ENCODE measurements at regions of chr10 and their contacts with region 1.

Region 1: GRCh38 chr10:119859420-119860258 is 13.0 kb downstream of the MCMBP start:
- DNase-seq: no peak
- ATAC-seq: peak; percentile 55
- H3K4me3 Mint-ChIP-seq: no peak overlapping the region
- H3K27ac Mint-ChIP-seq: peak overlapping the region; percentile 10
- H3K4me1 Mint-ChIP-seq: peaks cover 40% of the 10 kb centered on the region
- H3K27me3 Mint-ChIP-seq: no peaks in the 10 kb centered on the region
- CTCF ChIP-seq: peak; percentile 83

Region 2: GRCh38 chr10:119686439-119687191 is 173.0 kb before region 1 on chr10:
- CTCF ChIA-PET with region 1: interaction called, 37 read pairs
- POLR2A ChIA-PET with region 1: interaction called, 6 read pairs
- intact Hi-C with region 1: loop called (anchors 1 kb)
- DNase-seq: peak; percentile 86
- ATAC-seq: peak; percentile 89
- H3K4me3 Mint-ChIP-seq: peak overlapping the region; percentile 21
- H3K27ac Mint-ChIP-seq: peak overlapping the region; percentile 77
- H3K4me1 Mint-ChIP-seq: peaks cover 20% of the 10 kb centered on the region
- H3K27me3 Mint-ChIP-seq: no peaks in the 10 kb centered on the region
- CTCF ChIP-seq: peak; percentile 98

Region 3: DNA sequence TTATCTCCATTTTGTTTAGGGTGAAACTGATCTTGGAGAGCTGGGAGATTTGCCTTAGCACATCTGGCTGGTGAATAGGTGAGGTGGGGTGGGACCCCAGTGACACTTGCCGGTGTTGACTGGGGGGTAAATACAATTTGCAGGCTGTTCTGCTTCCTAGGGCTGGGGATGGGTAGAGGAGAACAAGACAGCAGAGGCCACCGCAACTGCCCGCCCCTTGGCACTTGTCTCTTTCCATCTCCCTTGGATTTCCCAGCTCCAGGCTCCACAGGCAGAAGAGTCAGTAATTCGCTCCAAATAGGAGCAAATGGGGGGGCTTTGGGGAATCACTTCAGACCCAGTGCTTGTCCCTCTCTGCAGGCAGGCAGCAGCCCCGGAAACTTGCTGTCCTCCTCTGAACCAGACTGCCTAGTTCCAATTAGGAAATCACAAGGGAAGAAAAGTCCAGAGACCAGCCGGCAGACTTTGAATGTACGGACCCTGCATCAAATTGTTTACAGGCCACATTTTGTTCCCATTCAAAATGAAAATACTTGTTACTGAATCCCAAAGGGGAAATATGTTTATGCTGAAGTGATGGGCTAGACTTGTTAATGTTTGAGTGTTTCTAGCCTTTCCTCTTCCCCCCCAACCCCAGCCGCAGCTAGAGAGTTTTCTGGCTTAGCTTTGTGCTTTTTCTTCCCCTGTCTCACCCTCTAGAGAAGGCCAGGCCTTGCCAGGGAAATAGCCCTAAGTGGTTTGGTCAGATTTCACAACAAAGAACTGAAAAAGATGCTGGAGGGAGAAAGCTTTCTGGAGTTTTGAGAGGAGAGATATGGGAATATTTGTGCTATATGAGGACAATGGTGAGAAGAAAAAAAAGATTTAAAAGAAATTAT is 143.8 kb before region 1 on chr10:
- CTCF ChIA-PET with region 1: interaction called, 10 read pairs
- POLR2A ChIA-PET with region 1: no interaction called
- intact Hi-C with region 1: no loop called
- DNase-seq: no peak
- ATAC-seq: no peak
- H3K4me3 Mint-ChIP-seq: no peak overlapping the region
- H3K27ac Mint-ChIP-seq: no peak overlapping the region
- H3K4me1 Mint-ChIP-seq: peaks cover 7% of the 10 kb centered on the region
- H3K27me3 Mint-ChIP-seq: no peaks in the 10 kb centered on the region
- CTCF ChIP-seq: no peak

Region 4: DNA sequence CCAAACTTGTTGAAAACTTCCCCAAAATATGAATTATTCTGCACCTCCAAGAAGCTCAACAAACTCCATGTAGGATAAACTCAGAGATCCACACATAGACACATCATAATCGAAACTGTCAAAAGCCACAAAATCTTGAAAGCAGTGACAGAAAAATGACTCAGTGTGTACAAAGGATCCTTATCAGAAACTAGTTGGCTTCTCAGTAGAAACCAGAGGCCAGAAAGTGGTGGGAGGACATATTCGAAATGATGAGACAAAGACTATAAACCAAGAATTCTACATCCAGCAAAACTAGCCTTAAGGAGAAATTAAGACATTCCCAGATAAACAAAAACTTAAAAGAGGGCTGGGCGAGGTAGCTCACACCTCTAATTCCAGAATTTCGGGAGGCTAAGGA is 25.5 kb before region 1 on chr10:
- CTCF ChIA-PET with region 1: interaction called, 18 read pairs
- POLR2A ChIA-PET with region 1: interaction called, 3 read pairs
- intact Hi-C with region 1: no loop called
- DNase-seq: peak; percentile 16
- ATAC-seq: peak; percentile 82
- H3K4me3 Mint-ChIP-seq: no peak overlapping the region
- H3K27ac Mint-ChIP-seq: peak overlapping the region; percentile 50
- H3K4me1 Mint-ChIP-seq: peaks cover 27% of the 10 kb centered on the region
- H3K27me3 Mint-ChIP-seq: no peaks in the 10 kb centered on the region
- CTCF ChIP-seq: no peak

Region 5: GRCh38 chr10:119872860-119873681 is 13.4 kb after region 1 on chr10:
- CTCF ChIA-PET with region 1: interaction called, 69 read pairs
- POLR2A ChIA-PET with region 1: interaction called, 21 read pairs
- intact Hi-C with region 1: no loop called
- DNase-seq: peak; percentile 87
- ATAC-seq: peak; percentile 95
- H3K4me3 Mint-ChIP-seq: peak overlapping the region; percentile 80
- H3K27ac Mint-ChIP-seq: peak overlapping the region; percentile 91
- H3K4me1 Mint-ChIP-seq: peaks cover 34% of the 10 kb centered on the region
- H3K27me3 Mint-ChIP-seq: no peaks in the 10 kb centered on the region
- CTCF ChIP-seq: no peak

Region 6: GRCh38 chr10:120077707-120078492 is 218.3 kb after region 1 on chr10:
- CTCF ChIA-PET with region 1: no interaction called
- POLR2A ChIA-PET with region 1: no interaction called
- intact Hi-C with region 1: no loop called
- DNase-seq: peak; percentile 2
- ATAC-seq: no peak
- H3K4me3 Mint-ChIP-seq: no peak overlapping the region
- H3K27ac Mint-ChIP-seq: no peak overlapping the region
- H3K4me1 Mint-ChIP-seq: no peaks in the 10 kb centered on the region
- H3K27me3 Mint-ChIP-seq: peaks cover 22% of the 10 kb centered on the region
- CTCF ChIP-seq: no peak

Region 7: GRCh38 chr10:120423431-120424197 is 564.0 kb after region 1 on chr10:
- CTCF ChIA-PET with region 1: no interaction called
- POLR2A ChIA-PET with region 1: no interaction called
- intact Hi-C with region 1: no loop called
- DNase-seq: peak; percentile 60
- ATAC-seq: peak; percentile 60
- H3K4me3 Mint-ChIP-seq: no peak overlapping the region
- H3K27ac Mint-ChIP-seq: no peak overlapping the region
- H3K4me1 Mint-ChIP-seq: no peaks in the 10 kb centered on the region
- H3K27me3 Mint-ChIP-seq: no peaks in the 10 kb centered on the region
- CTCF ChIP-seq: peak; percentile 63

Measured in activated CD8-positive, alpha-beta T cell treated with anti-CD3 and anti-CD28 coated beads for 36 hours (primary cell).